Activated B cell treated with CpG ODN at 0.5 μM for 24 hours (primary cell): ENCODE measurements at regions of chr1 and their contacts with region 1.

Region 1: GRCh38 chr1:169794530-169795416 is at the start of gene METTL18:
- DNase-seq: peak; percentile 77
- ATAC-seq: peak; percentile 98
- H3K4me3 Mint-ChIP-seq: peak within 1 kb of the TSS; percentile 100
- H3K27ac Mint-ChIP-seq: peak within 1 kb of the TSS; percentile 99
- H3K4me1 Mint-ChIP-seq: peaks cover 50% of the 10 kb centered on the region
- H3K27me3 Mint-ChIP-seq: no peaks in the 10 kb centered on the region
- CTCF ChIP-seq: no peak
- total RNA-seq, gene METTL18: 12.0 and 14.5 TPM in 2 replicates

Region 2: GRCh38 chr1:169546087-169546995 is 248.4 kb before region 1 on chr1:
- CTCF ChIA-PET with region 1: interaction called, 3 read pairs
- POLR2A ChIA-PET with region 1: no interaction called
- intact Hi-C with region 1: loop called (anchors 5 kb)
- DNase-seq: no peak
- ATAC-seq: peak; percentile 78
- H3K4me3 Mint-ChIP-seq: no peak overlapping the region
- H3K27ac Mint-ChIP-seq: no peak overlapping the region
- H3K4me1 Mint-ChIP-seq: no peaks in the 10 kb centered on the region
- H3K27me3 Mint-ChIP-seq: peaks cover 3% of the 10 kb centered on the region
- CTCF ChIP-seq: peak; percentile 73

Region 3: GRCh38 chr1:169586395-169587255 is 208.1 kb before region 1 on chr1 and contains the start of gene F5:
- CTCF ChIA-PET with region 1: no interaction called
- POLR2A ChIA-PET with region 1: interaction called, 3 read pairs
- intact Hi-C with region 1: loop called (anchors 5 kb)
- DNase-seq: peak; percentile 40
- ATAC-seq: peak; percentile 98
- H3K4me3 Mint-ChIP-seq: peak within 1 kb of the TSS; percentile 66
- H3K27ac Mint-ChIP-seq: no peak within 1 kb of the TSS
- H3K4me1 Mint-ChIP-seq: peaks cover 7% of the 10 kb centered on the region
- H3K27me3 Mint-ChIP-seq: peaks cover 18% of the 10 kb centered on the region
- CTCF ChIP-seq: no peak
- total RNA-seq, gene F5: 0.66 and 0.67 TPM in 2 replicates

Region 4: GRCh38 chr1:169694304-169695075 is 100.3 kb before region 1 on chr1:
- CTCF ChIA-PET with region 1: no interaction called
- POLR2A ChIA-PET with region 1: interaction called, 6 read pairs
- intact Hi-C with region 1: loop called (anchors 2 kb)
- DNase-seq: no peak
- ATAC-seq: peak; percentile 9
- H3K4me3 Mint-ChIP-seq: peak overlapping the region; percentile 62
- H3K27ac Mint-ChIP-seq: peak overlapping the region; percentile 90
- H3K4me1 Mint-ChIP-seq: peaks cover 97% of the 10 kb centered on the region
- H3K27me3 Mint-ChIP-seq: no peaks in the 10 kb centered on the region
- CTCF ChIP-seq: no peak

Region 5: DNA sequence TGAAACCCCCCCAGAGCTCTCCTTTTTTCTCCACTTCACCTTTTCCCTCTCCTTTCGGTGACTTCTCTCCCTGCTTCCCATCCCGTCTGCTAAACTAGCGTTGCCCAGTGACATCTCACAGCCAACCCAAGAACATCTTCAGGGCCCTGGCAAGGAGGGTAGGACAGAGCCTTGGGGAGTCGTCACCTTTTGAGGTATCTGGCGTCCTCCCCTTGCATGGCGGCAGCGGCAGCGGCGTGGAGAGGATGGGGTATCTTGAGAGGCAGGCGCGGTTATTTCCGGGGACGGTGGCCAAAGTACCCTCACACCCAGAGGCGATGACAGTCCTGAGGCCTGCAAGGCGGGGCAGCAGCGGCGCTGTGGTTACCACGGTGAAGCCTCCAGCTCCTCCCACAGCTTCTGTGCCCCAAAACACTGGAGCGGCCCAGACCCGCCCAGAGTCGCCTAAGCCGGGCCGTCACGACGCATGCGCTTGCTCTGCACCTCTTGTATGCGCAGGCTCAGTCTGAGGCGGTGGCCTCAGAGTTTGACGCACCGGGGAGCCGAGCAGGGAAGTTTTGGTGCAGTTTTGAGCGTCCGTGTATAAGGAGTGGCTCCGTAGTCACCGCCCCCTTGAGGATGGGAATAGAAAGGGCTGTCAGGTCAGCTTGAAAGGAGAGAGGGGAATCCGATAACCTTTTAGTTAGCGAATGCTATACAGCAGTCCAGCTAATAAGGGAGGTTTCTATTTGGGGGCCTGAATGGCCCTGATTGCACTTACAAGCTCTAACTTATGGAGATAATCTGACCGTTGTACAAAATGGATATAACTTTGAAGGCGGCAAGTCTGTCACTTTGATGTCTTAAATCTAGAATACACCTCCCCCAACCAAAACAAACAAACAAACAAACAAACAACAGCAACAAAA is 279.7 kb after region 1 on chr1 and contains the start of gene KIFAP3:
- CTCF ChIA-PET with region 1: no interaction called
- POLR2A ChIA-PET with region 1: no interaction called
- intact Hi-C with region 1: loop called (anchors 1 kb)
- DNase-seq: peak; percentile 89
- ATAC-seq: peak; percentile 93
- H3K4me3 Mint-ChIP-seq: peak within 1 kb of the TSS; percentile 94
- H3K27ac Mint-ChIP-seq: peak within 1 kb of the TSS; percentile 87
- H3K4me1 Mint-ChIP-seq: peaks cover 52% of the 10 kb centered on the region
- H3K27me3 Mint-ChIP-seq: peaks cover 2% of the 10 kb centered on the region
- CTCF ChIP-seq: no peak
- total RNA-seq, gene KIFAP3: 11.8 and 12.7 TPM in 2 replicates

Region 6: DNA sequence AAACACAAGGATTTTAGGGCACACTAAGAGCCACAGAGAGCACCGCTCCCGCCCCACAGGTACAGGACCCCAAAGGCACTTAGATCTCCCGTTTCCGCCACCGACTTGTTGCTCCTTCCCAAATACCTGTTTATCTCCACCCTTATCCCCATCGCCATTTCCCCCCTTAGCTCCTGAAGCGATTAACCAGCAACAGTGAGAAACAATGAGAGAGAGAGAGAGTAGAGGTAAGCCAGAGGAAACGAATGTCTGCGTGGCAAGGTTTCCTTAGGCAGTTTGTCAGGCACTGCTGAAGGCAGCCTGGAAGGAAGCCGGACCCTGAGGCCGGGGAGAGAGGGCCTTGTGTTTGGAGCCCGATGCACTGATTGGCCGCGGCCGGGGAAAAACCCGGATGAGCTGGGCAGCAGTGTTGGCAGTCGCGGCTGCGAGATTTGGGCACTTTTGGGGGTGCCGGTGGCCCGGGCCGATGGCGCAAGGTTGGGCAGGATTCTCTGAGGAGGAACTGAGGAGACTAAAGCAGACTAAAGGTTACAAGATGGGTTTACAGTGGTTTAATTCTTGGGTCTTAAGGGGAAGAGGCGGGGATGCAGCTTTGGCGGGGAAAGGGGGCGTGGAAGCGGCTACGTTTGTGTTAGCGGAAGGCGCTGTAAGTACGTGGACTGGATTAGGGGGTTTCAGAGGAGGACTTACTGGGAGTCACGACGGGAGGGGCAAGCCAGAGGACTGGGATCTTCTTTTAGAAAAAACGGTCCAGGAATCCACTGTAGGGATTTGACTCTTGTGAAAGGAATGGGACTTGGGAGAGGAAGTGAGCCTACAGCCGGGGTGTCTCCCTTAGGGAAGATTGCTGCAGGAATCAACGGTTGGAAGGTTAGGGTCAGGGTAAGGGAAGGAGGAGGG is 737.2 kb after region 1 on chr1 and contains the start of gene GORAB:
- CTCF ChIA-PET with region 1: no interaction called
- POLR2A ChIA-PET with region 1: interaction called, 4 read pairs
- intact Hi-C with region 1: loop called (anchors 1 kb)
- DNase-seq: peak; percentile 77
- ATAC-seq: peak; percentile 98
- H3K4me3 Mint-ChIP-seq: no peak within 1 kb of the TSS
- H3K27ac Mint-ChIP-seq: no peak within 1 kb of the TSS
- H3K4me1 Mint-ChIP-seq: peaks cover 13% of the 10 kb centered on the region
- H3K27me3 Mint-ChIP-seq: peaks cover 4% of the 10 kb centered on the region
- CTCF ChIP-seq: no peak
- total RNA-seq, gene GORAB: 20.0 and 20.2 TPM in 2 replicates